ENCODE measurements at regions of chr4 and their contacts with region 1.

Region 1: GRCh38 chr4:25938787-25939186 is 24.8 kb downstream of the SMIM20 start:
- DNase-seq: peak; percentile 46
- H3K4me3 Mint-ChIP-seq: no peak overlapping the region
- H3K27ac Mint-ChIP-seq: peak overlapping the region; percentile 74
- H3K4me1 Mint-ChIP-seq: peaks cover 37% of the 10 kb centered on the region
- H3K27me3 Mint-ChIP-seq: no peaks in the 10 kb centered on the region

Region 2: DNA sequence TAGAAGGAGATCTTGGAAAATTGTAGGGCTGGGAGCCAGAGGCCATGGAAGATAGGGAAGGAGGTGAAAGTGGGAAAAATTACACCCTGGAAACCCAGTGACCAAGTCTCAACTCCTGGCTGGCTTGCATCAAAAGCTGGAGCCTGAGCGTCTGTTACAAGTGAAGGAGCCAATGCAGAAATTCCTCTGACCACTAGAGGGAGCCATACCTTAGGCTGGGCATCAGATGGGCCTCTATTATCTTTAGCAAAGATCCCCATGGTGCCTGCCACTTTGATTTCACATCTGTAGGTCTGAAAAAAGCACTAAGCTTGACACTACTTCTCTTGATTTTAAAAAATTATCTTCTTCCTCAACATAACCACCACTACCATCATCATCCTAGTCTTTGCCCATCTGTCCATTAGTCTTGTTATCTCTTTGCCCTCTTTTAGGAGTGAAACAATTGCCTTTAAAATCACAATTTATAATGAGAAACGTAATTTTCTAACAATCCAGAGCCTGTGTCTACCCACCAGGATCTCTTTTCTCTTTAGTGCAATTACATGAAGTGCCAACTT is 498.8 kb before region 1 on chr4:
- CTCF ChIA-PET with region 1: no interaction called
- POLR2A ChIA-PET with region 1: no interaction called
- DNase-seq: peak; percentile 62
- H3K4me3 Mint-ChIP-seq: no peak overlapping the region
- H3K27ac Mint-ChIP-seq: no peak overlapping the region
- H3K4me1 Mint-ChIP-seq: no peaks in the 10 kb centered on the region
- H3K27me3 Mint-ChIP-seq: no peaks in the 10 kb centered on the region

Region 3: GRCh38 chr4:25756503-25756902 is 182.3 kb before region 1 on chr4:
- CTCF ChIA-PET with region 1: no interaction called
- POLR2A ChIA-PET with region 1: no interaction called
- DNase-seq: no peak
- H3K4me3 Mint-ChIP-seq: no peak overlapping the region
- H3K27ac Mint-ChIP-seq: no peak overlapping the region
- H3K4me1 Mint-ChIP-seq: no peaks in the 10 kb centered on the region
- H3K27me3 Mint-ChIP-seq: no peaks in the 10 kb centered on the region

Region 4: GRCh38 chr4:25904748-25905082 is 34.1 kb before region 1 on chr4:
- CTCF ChIA-PET with region 1: no interaction called
- POLR2A ChIA-PET with region 1: no interaction called
- DNase-seq: no peak
- H3K4me3 Mint-ChIP-seq: no peak overlapping the region
- H3K27ac Mint-ChIP-seq: no peak overlapping the region
- H3K4me1 Mint-ChIP-seq: peaks cover 8% of the 10 kb centered on the region
- H3K27me3 Mint-ChIP-seq: no peaks in the 10 kb centered on the region

Region 5: GRCh38 chr4:25928379-25929297 is 10.1 kb before region 1 on chr4:
- CTCF ChIA-PET with region 1: interaction called, 14 read pairs
- POLR2A ChIA-PET with region 1: no interaction called
- DNase-seq: no peak
- H3K4me3 Mint-ChIP-seq: no peak overlapping the region
- H3K27ac Mint-ChIP-seq: no peak overlapping the region
- H3K4me1 Mint-ChIP-seq: peaks cover 5% of the 10 kb centered on the region
- H3K27me3 Mint-ChIP-seq: no peaks in the 10 kb centered on the region

Region 6: DNA sequence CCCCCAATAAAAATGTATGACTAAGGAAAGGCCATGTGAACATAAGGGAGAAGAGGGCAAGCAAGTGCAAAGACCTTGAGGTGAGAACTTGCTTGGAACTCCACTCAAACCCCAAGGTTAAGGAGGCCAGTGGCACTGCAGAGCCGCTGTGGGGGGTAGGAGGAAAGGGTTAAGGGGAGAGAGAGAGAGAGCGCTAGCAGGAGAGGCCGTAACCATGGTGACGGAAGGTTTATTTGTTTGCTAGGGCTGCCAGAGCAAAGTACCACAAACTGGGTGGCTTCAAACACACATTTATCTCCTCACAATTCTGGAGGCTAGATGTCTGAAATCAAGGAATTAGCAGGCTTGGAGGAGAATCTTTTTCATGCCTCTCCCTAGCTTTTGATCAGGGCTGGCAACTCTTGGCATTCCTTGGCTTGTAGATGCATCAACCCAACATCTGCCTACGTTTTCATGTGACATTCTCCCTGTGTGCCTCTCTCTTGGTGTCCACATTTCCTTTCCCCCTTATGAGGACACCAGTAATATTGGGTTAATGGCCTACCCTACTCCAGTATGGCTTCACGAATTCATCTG is 10.5 kb after region 1 on chr4:
- CTCF ChIA-PET with region 1: no interaction called
- POLR2A ChIA-PET with region 1: no interaction called
- DNase-seq: no peak
- H3K4me3 Mint-ChIP-seq: no peak overlapping the region
- H3K27ac Mint-ChIP-seq: no peak overlapping the region
- H3K4me1 Mint-ChIP-seq: peaks cover 12% of the 10 kb centered on the region
- H3K27me3 Mint-ChIP-seq: peaks cover 15% of the 10 kb centered on the region

Measured in activated CD4-positive, alpha-beta memory T cell treated with anti-CD3 and anti-CD28 coated beads, Interleukin-2, amount 10 ng/mL, durations not matched to agents 7 days and 5 days (primary cell).